Mammary epithelial cell (primary cell): ENCODE measurements at regions of chr16 and their contacts with region 1.

Region 1: DNA sequence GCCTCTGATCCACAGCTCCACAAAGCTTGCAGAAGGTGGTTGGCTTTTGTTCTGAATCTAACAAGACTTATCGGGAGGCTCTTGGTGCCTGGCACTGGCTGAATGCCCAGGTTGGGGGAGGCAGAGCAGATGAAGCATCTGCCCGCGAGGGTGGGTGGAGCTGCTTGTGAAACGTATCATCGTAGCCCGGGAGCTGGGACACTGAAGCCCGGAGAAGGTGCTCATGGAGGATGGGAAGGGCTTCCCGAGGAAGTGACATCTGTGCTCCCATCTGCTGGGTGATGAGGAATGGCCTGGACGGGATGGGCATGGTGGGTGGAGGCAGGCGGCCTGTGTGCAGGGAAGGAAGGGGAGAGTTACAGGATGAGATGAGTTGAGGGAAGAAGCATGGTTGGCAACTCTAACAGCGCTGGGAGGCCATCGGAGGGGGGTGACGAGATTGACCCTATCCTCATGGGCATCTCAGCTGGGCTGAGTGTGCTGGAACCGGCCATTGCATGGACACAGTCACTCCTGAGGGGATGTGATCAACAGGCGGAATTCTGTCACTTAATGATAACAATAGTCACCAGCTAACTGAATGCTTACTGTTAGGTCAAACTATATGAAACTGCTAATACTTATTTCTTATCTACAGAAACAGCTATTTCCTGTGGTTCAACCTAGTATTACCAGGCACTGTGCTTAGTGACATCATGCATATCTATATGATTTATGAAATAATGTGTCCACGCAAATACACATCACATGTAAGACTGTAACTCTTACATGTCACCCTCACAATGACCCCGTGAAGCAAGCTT is 102.7 kb downstream of the ABCC6 start:
- DNase-seq: no peak
- H3K4me3 ChIP-seq: no peak overlapping the region
- H3K27ac ChIP-seq: no peak overlapping the region
- H3K4me1 ChIP-seq: no peaks in the 10 kb centered on the region
- H3K27me3 ChIP-seq: no peaks in the 10 kb centered on the region
- CTCF ChIP-seq: no peak

Region 2: DNA sequence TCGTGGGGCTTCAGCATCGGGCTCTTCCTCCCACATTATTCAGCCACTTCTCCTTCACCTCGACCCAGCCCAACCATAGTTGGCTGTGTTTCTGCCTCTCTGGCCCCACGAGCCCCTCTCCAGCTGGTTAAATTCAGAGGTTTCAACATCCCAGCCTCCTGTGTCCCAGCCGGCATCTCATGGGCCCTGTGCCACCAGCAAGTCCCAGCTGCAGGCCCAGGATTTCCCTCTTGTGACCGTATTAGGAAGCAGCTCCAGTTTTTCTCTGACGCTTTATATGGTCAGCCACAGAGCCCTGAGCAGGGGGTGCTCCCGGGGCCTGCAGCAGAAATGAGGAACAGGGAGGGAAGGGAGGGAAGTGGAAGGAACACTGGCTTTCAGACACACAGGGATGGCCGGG is 291.1 kb before region 1 on chr16:
- CTCF ChIA-PET with region 1: no interaction called
- dilution Hi-C with region 1: loop called (anchors 5 kb)
- in situ Hi-C with region 1: no loop called
- intact Hi-C with region 1: no loop called
- DNase-seq: no peak
- H3K4me3 ChIP-seq: no peak overlapping the region
- H3K27ac ChIP-seq: no peak overlapping the region
- H3K4me1 ChIP-seq: no peaks in the 10 kb centered on the region
- H3K27me3 ChIP-seq: no peaks in the 10 kb centered on the region
- CTCF ChIP-seq: no peak

Region 3: DNA sequence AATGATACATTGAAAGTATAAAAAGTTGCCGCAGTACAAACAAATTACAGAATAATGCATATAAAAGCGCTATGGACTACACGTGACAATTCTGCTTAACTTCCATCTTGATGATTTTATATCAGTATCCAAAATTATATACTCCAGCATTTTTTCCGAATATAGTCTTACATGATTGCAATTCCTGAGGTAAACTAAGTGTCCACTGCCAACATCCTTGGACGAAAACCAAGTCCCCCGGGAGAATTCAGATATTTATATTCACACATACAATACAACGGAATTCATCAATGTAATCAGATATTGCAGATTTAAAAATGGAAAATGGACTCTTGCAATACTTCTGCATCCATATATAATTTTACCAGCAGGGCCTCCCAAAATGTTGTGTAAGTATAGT is 254.8 kb before region 1 on chr16:
- CTCF ChIA-PET with region 1: no interaction called
- dilution Hi-C with region 1: loop called (anchors 5 kb)
- in situ Hi-C with region 1: no loop called
- intact Hi-C with region 1: no loop called
- DNase-seq: no peak
- H3K4me3 ChIP-seq: no peak overlapping the region
- H3K27ac ChIP-seq: no peak overlapping the region
- H3K4me1 ChIP-seq: peaks cover 16% of the 10 kb centered on the region
- H3K27me3 ChIP-seq: no peaks in the 10 kb centered on the region
- CTCF ChIP-seq: no peak

Region 4: GRCh38 chr16:15983898-15984297 is 136.7 kb before region 1 on chr16:
- CTCF ChIA-PET with region 1: no interaction called
- dilution Hi-C with region 1: no loop called
- in situ Hi-C with region 1: no loop called
- intact Hi-C with region 1: no loop called
- DNase-seq: no peak
- H3K4me3 ChIP-seq: no peak overlapping the region
- H3K27ac ChIP-seq: no peak overlapping the region
- H3K4me1 ChIP-seq: peaks cover 7% of the 10 kb centered on the region
- H3K27me3 ChIP-seq: no peaks in the 10 kb centered on the region
- CTCF ChIP-seq: no peak

Region 5: GRCh38 chr16:15993946-15994665 is 126.5 kb before region 1 on chr16:
- CTCF ChIA-PET with region 1: no interaction called
- dilution Hi-C with region 1: loop called (anchors 5 kb)
- in situ Hi-C with region 1: no loop called
- intact Hi-C with region 1: no loop called
- DNase-seq: no peak
- H3K4me3 ChIP-seq: no peak overlapping the region
- H3K27ac ChIP-seq: no peak overlapping the region
- H3K4me1 ChIP-seq: peaks cover 17% of the 10 kb centered on the region
- H3K27me3 ChIP-seq: no peaks in the 10 kb centered on the region
- CTCF ChIP-seq: no peak

Region 6: GRCh38 chr16:16033208-16033717 is 87.3 kb before region 1 on chr16:
- CTCF ChIA-PET with region 1: no interaction called
- dilution Hi-C with region 1: loop called (anchors 5 kb)
- in situ Hi-C with region 1: no loop called
- intact Hi-C with region 1: no loop called
- DNase-seq: no peak
- H3K4me3 ChIP-seq: no peak overlapping the region
- H3K27ac ChIP-seq: no peak overlapping the region
- H3K4me1 ChIP-seq: no peaks in the 10 kb centered on the region
- H3K27me3 ChIP-seq: no peaks in the 10 kb centered on the region
- CTCF ChIP-seq: no peak

Region 7: GRCh38 chr16:16059895-16060590 is 60.5 kb before region 1 on chr16:
- CTCF ChIA-PET with region 1: no interaction called
- dilution Hi-C with region 1: loop called (anchors 5 kb)
- in situ Hi-C with region 1: no loop called
- intact Hi-C with region 1: no loop called
- DNase-seq: no peak
- H3K4me3 ChIP-seq: no peak overlapping the region
- H3K27ac ChIP-seq: no peak overlapping the region
- H3K4me1 ChIP-seq: no peaks in the 10 kb centered on the region
- H3K27me3 ChIP-seq: no peaks in the 10 kb centered on the region
- CTCF ChIP-seq: no peak